Dendritic cell treated with granulocyte-macrophage colony-stimulating factor and Interleukin-4, amounts not matched to agents 40 ng/mL and 50 ng/mL, for 4 days (primary cell): ENCODE measurements at regions of chr19 and their contacts with region 1.

Region 1: DNA sequence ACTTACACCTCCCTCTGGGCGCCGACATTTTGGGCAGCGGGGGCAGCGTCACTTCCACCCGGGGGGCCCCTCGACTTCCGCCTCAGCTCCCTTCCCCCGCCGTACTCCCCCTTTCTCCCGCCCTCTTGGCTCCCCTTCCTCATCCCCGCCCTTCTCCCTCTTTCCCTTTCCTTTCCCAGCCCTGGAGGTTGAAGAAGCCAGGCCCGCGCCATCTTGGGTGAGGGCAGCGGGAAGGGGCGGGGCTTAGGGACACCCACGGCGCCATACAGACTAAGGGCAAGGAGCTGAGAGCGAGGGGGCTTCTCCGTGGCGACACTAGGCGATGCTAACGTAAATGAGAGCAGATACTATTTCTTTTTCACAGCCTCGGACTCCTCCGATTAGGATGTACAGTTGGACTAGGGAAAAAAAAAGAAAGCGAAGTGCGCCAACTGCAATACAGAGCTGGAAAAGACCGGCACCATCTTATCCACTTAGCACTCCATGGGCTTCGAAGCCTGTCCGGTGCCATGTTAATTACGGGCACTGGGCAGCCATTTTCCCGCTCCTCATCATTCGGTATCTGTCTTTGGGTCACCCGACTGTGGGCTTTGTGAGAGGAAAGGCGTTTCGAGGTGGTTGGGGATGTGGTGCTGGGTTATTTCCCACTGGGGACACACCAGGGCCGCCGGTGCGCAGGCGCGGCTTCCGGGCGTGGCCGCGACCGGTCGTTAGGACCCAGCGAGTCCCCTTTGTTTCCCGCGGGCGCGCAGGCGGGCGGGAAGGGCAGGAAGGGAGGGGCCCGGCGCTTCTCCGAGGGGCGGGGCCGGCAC is at the start of gene FIZ1:
- H3K4me3 Mint-ChIP-seq: peak within 1 kb of the TSS; percentile 90
- H3K27ac Mint-ChIP-seq: peak within 1 kb of the TSS; percentile 95
- H3K4me1 Mint-ChIP-seq: peaks cover 54% of the 10 kb centered on the region
- H3K27me3 Mint-ChIP-seq: no peaks in the 10 kb centered on the region

Region 2: DNA sequence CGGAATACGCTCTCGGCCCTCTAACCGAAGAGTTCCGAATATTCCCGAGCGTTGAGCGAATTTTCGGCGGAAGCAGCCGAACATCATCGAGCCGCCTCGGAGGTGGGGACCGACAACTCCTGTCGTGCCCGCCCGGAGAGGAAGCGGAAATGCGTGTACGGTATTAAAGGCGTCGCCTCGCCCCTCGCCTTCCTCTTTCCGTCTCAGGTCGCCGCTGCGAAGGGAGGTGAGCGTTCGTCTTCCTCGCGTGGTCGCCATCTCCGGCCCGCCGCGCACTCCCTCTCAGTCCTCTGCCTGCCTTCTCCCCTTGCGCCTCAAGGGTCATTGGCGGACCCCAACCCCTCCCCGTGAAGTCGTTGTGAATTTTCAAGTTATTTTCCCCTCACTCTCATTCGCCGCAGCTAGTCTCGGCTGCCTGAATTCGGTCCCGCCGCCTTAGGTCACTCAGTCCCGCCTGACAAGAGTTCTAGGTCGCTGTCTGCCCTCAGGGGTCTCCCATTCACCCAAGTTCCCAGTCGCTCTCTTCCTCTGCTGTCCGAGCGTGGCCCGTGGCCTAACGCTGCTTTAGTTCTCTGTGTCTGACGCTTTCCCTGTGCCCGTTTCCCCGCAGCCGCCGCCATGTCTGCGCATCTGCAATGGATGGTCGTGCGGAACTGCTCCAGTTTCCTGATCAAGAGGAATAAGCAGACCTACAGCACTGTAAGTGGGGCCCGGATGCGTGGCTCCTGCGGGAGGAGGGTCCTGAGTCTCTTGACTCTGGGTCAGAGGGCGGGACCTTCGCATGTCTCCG is 213.7 kb before region 1 on chr19 and contains the start of gene RPL28:
- intact Hi-C with region 1: no loop called
- H3K4me3 Mint-ChIP-seq: peak within 1 kb of the TSS; percentile 91
- H3K27ac Mint-ChIP-seq: peak within 1 kb of the TSS; percentile 95
- H3K4me1 Mint-ChIP-seq: peaks cover 72% of the 10 kb centered on the region
- H3K27me3 Mint-ChIP-seq: peaks cover 12% of the 10 kb centered on the region

Region 3: DNA sequence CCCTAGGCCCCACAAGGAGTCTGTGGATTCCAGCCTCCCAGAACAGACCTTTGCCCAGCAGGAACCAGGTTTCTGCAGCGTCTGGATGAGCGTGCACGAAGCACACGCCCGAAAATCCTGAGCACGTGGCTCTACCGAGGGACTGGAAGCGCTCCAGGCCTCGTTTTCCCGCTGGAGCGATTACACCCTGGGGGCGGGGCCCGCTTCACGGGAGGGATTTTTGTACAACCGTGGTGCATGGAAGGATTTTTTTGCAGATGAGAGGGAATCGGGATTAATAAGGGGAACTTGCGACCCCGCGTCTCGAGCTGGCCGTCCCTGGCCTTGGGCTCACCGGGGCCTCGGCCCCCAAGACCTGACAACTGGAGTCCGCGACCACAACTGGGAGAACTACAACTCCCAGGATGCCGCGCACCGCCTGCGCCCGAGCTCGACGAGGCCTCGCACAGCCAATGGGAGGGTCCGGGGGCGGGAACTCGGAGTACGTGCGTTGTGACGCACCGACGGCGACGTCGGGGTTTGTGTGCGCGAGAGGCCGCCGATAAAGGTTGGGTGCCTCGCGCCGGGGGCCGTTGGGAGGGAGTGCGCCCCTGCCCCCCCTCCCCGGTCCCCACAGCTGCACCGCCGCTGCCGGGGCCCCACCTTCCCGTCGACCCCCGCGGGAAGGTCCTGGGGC is 123.4 kb before region 1 on chr19 and contains the start of gene ZNF628:
- intact Hi-C with region 1: loop called (anchors 2 kb)
- H3K4me3 Mint-ChIP-seq: peak within 1 kb of the TSS; percentile 87
- H3K27ac Mint-ChIP-seq: peak within 1 kb of the TSS; percentile 90
- H3K4me1 Mint-ChIP-seq: peaks cover 33% of the 10 kb centered on the region
- H3K27me3 Mint-ChIP-seq: no peaks in the 10 kb centered on the region

Region 4: DNA sequence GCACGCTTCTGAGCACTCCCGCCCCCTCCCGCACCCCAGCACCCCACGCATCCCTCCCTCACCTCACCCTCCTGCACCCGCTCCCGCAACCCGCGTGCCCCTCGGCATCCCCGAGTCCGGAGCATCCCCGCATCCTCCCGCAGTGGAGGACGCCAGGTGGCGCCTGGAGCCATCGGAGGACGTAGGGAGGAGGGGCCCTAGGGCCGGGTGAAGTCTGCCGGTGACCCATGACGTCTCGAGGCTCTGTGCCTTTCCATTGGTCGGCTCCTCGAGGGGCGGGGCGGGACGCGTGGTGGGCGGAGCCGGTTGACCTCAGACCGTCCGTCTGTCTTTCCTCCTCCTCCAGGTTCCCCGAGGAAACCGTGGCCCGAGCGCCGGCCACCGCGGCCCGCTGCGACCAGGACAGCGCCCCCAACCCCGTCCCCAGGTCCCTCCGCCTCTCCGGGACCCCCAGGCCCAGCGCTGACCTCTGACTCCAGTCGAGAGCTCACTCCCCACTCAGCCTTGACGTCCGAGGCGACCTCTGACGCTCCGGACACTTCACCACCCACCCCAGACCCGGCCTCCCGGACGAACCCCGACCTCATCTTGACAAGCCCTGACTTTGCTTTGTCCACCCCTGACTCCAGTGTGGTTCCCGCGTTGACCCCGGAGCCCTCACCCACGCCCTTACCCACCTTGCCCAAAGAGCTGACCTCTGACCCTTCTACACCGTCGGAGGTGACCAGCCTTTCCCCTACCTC is 82.6 kb before region 1 on chr19:
- intact Hi-C with region 1: loop called (anchors 5 kb)
- H3K4me3 Mint-ChIP-seq: peak overlapping the region; percentile 76
- H3K27ac Mint-ChIP-seq: peak overlapping the region; percentile 93
- H3K4me1 Mint-ChIP-seq: peaks cover 6% of the 10 kb centered on the region
- H3K27me3 Mint-ChIP-seq: peaks cover 21% of the 10 kb centered on the region

Region 5: GRCh38 chr19:55552620-55553019 is 47.1 kb before region 1 on chr19:
- intact Hi-C with region 1: no loop called
- H3K4me3 Mint-ChIP-seq: no peak overlapping the region
- H3K27ac Mint-ChIP-seq: no peak overlapping the region
- H3K4me1 Mint-ChIP-seq: peaks cover 3% of the 10 kb centered on the region
- H3K27me3 Mint-ChIP-seq: peaks cover 23% of the 10 kb centered on the region

Region 6: DNA sequence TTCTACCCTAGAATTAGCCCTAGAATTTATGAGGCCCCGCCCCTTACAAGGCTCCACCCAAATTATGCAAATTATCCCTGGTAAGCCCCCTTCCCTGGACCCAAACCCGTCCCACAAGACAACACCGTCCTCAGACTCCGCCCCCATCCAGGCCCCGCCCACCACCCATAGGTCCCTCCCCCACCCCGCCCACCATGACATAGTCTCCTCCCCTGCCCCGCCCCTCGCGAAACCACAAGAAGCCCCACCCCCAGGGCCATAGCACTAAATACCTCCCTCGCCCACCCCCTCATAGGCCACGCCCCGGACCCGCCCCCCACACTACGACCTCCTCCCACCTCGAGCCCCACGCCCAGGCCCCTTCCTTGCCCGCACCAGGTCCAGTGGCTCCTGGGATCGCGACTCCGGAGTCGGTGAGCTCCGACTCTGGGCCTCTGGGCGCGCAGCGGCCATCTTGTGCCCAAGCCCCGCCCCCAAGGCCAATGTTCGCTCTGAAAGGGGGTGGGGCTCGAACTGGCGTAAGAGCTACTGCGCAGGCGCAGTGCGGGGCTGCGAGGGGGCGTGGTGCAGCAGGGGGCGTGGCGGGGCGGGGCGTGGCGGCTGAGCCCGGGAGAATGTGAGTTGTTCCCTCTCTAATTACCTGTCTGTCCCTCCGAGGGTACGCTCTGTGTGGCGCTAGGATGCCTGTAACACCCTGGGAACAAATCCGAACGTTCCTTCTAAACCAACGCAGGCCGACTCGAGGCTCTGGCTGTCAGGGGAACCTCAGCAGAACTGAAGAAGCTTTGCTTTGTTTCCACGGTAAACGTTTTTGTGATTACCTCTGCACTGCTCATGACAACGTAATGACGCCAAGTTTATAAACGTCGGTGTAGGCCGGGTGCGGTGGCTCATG is 24.7 kb after region 1 on chr19 and contains the start of gene ZNF784:
- intact Hi-C with region 1: loop called (anchors 1 kb)
- H3K4me3 Mint-ChIP-seq: peak within 1 kb of the TSS; percentile 90
- H3K27ac Mint-ChIP-seq: peak within 1 kb of the TSS; percentile 98
- H3K4me1 Mint-ChIP-seq: peaks cover 47% of the 10 kb centered on the region
- H3K27me3 Mint-ChIP-seq: peaks cover 2% of the 10 kb centered on the region

Region 7: GRCh38 chr19:55640577-55641425 is 41.1 kb after region 1 on chr19 and contains the start of gene ZNF580:
- intact Hi-C with region 1: loop called (anchors 5 kb)
- H3K4me3 Mint-ChIP-seq: peak within 1 kb of the TSS; percentile 96
- H3K27ac Mint-ChIP-seq: peak within 1 kb of the TSS; percentile 89
- H3K4me1 Mint-ChIP-seq: peaks cover 87% of the 10 kb centered on the region
- H3K27me3 Mint-ChIP-seq: no peaks in the 10 kb centered on the region

Region 8: GRCh38 chr19:55653758-55654539 is 54.3 kb after region 1 on chr19:
- intact Hi-C with region 1: loop called (anchors 2 kb)
- H3K4me3 Mint-ChIP-seq: peak overlapping the region; percentile 90
- H3K27ac Mint-ChIP-seq: peak overlapping the region; percentile 96
- H3K4me1 Mint-ChIP-seq: peaks cover 56% of the 10 kb centered on the region
- H3K27me3 Mint-ChIP-seq: no peaks in the 10 kb centered on the region